PC-3 (cell line): ENCODE measurements at regions of chr10 and their contacts with region 1.

Region 1: GRCh38 chr10:74040200-74041126 is 42.5 kb downstream of the VCL start:
- DNase-seq: no peak
- ATAC-seq: no peak
- H3K4me3 ChIP-seq: no peak overlapping the region
- H3K27ac ChIP-seq: no peak overlapping the region
- H3K4me1 ChIP-seq: no peaks in the 10 kb centered on the region
- H3K27me3 ChIP-seq: no peaks in the 10 kb centered on the region
- CTCF ChIP-seq: no peak

Region 2: GRCh38 chr10:74027702-74028101 is 12.8 kb before region 1 on chr10:
- CTCF ChIA-PET with region 1: interaction called, 6 read pairs
- POLR2A ChIA-PET with region 1: interaction called, 14 read pairs
- intact Hi-C with region 1: no loop called
- DNase-seq: peak; percentile 89
- ATAC-seq: no peak
- H3K4me3 ChIP-seq: no peak overlapping the region
- H3K27ac ChIP-seq: peak overlapping the region; percentile 2
- H3K4me1 ChIP-seq: peaks cover 33% of the 10 kb centered on the region
- H3K27me3 ChIP-seq: no peaks in the 10 kb centered on the region
- CTCF ChIP-seq: no peak